K562 (cell line): ENCODE measurements at regions of chr2 and their contacts with region 1.

Region 1: GRCh38 chr2:48725696-48726494 is 29.6 kb downstream of the LHCGR start:
- DNase-seq: peak in 2 of 4 experiments; percentile 25 to 38
- ATAC-seq: peak; percentile 88
- H3K4me3 ChIP-seq: no peak overlapping the region
- H3K27ac ChIP-seq: no peak overlapping the region
- H3K4me1 ChIP-seq: peaks cover 0 to 3% of the 10 kb centered on the region in 2 experiments; a peak in 1 of 5 replicates
- H3K27me3 ChIP-seq: no peaks in the 10 kb centered on the region
- CTCF ChIP-seq: peak; percentile 48 to 83 (median 53)
- EP300 ChIP-seq: no peak
- POLR2A ChIP-seq: no peak
- RAD21 ChIP-seq: peak; percentile 66 to 83

Region 2: DNA sequence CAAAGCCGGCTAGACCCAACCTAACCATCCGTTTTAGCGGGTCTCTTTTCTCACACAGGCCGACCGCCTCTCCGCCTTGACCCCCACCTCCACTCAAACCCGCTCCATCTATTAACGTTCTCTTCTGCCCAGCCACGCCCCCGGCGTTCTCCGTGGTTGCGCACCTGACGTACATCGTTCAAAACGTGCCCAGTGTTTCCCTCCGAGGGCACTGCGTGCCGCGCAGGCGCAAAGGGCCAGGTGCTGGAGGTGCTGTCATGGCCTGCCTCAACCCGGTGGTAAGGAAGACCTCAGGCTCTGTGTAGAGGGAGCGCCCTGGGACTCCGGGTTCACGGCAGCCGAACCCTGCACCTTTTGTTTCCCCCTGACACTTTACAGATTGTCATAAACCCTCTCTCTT is 108.3 kb before region 1 on chr2 and contains the start of gene GTF2A1L:
- CTCF ChIA-PET with region 1: interaction called, 4 read pairs
- POLR2A ChIA-PET with region 1: no interaction called
- in situ Hi-C with region 1: no loop called
- intact Hi-C with region 1: loop called (anchors 1 kb)
- DNase-seq: no peak
- ATAC-seq: peak; percentile 40; the same call in 2 of the 3 replicates
- H3K4me3 ChIP-seq: no peak within 1 kb of the TSS
- H3K27ac ChIP-seq: no peak within 1 kb of the TSS
- H3K4me1 ChIP-seq: peaks cover 0 to 4% of the 10 kb centered on the region in 2 experiments; a peak in 1 of 5 replicates
- H3K27me3 ChIP-seq: no peaks in the 10 kb centered on the region
- CTCF ChIP-seq: no peak
- EP300 ChIP-seq: no peak
- POLR2A ChIP-seq: no peak
- RAD21 ChIP-seq: no peak
- polyA plus RNA-seq, gene GTF2A1L: 0.06 to 0.35 TPM